Cardiac septum (tissue), 1 donor: ENCODE measurements at regions of chr1 and their contacts with region 1.

Region 1: DNA sequence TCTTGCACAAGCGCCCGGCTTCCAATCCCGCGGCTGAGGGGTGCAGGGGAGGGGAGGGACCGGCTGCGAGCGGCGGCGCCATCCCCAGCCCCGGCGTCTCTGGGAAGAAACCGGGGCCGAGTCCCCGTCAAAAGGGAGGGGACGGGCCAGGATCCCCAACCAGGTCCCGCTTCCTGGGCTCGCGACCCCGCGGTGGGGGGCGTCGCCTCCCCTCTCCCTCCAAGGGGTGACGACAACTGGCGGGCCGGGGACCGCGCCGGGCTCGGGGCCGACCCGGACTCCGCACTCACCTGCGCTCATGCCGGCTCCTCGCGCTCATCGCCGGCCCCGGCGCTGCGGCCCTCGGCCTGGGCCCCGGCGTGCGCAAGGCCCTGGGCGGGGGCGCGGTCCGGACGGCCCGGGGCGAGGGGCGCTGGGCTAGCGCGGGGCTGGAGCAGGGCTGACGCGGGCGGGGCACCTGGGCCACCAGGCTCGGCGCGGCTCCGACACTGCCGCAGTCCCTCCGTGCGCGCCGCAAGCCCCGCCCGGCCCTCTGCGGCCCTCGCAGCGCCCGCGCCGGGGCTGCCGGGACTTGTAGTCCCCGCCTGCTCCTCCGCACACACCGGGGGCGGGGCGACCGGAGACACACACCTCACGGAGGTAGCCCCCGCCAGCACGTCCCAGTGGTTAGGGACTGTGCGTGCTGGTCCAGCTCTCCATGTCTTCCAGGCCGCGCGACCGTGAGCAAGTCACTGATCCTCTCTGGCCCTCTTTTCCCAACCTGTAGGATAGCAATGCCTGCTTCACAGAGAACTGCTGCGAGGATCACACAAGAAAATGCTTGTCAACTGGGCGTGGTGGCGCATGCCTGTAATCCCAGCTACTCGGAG is at the start of gene ATP13A2:
- DNase-seq: peak; percentile 85
- total RNA-seq, gene ATP13A2: 13.3 TPM

Region 2: DNA sequence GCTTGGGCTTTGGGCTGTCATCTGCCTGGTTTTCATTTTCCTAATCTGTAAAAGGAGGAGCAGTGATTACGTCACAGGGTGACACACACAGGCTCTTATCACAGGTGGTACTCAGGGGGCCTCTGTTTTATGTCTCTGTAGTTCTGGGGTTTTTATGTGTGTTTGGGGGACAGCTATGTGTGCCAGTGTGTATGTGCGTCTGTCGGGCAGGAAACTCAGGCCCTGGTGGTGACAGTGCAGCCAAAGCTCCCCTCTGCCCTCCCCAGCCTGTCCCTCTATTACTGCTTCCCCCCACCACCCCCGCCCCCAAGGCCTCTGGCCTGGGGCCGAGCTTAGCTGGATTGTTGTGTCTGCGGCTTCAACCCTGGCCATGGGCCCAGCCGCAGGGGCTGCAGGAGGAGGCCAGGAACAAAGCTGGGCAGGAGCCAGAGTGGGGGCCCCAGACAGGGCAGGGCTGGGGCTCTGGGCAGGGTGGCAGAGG is 44.5 kb before region 1 on chr1:
- intact Hi-C with region 1: loop called (anchors 5 kb)
- DNase-seq: no peak

Region 3: GRCh38 chr1:16999863-17000262 is 11.8 kb before region 1 on chr1:
- intact Hi-C with region 1: no loop called
- DNase-seq: no peak

Region 4: GRCh38 chr1:17053685-17054410 is 42.2 kb after region 1 on chr1 and contains the start of gene SDHB:
- intact Hi-C with region 1: loop called (anchors 2 kb)
- DNase-seq: peak; percentile 100
- total RNA-seq, gene SDHB: 260 TPM